Activated naive CD4-positive, alpha-beta T cell treated with anti-CD3 and anti-CD28 coated beads for 36 hours (primary cell): ENCODE measurements at regions of chr3 and their contacts with region 1.

Region 1: DNA sequence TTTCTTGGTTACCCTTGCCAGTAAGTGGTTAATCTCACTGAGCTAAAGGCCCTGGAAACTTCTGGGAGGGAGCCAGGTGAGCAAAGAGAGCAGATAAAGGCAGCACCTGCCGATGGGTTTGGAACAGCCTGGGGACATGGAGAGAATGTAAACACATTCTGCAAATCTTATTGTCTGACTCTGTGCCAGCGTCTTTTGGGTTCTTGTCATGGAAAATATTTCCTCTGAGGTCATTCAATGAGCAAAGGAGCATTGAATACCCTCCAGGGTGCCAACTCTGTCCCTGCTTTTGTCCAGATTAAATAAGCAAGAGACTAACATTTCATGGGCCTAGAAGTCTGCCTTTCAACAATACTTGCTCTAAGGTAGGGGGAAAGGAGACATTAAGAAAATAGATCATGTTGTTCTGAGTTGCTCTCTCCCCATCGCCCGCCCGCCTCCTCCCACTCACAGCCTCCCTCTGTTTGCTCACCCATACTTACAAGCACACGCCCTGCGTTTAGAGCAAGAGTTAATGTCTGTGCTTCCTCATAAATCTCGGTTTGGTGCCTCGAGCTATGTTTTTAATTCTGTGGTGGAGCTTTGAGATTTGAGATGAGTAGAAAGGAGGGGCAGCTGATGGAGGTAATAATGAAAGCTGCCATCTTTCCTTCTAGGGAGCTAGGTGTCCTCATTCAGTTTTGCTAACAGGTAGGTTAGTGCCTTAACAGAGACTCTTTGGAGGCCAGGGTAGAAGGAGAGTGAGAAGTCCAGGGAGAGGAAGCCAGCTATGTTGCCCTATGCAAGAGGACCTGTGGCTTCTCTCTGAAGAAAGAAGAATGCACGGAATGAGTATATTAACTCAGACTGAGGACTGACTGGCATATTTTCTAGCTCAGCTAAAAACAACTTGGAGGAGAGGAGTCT is 132.9 kb downstream of the TPRG1 start:
- DNase-seq: peak; percentile 59
- H3K4me3 Mint-ChIP-seq: peak overlapping the region; percentile 17
- H3K27ac Mint-ChIP-seq: peak overlapping the region; percentile 68
- H3K4me1 Mint-ChIP-seq: peaks cover 57% of the 10 kb centered on the region
- H3K27me3 Mint-ChIP-seq: no peaks in the 10 kb centered on the region

Region 2: GRCh38 chr3:189276481-189277219 is 28.0 kb before region 1 on chr3:
- CTCF ChIA-PET with region 1: interaction called, 4 read pairs
- intact Hi-C with region 1: loop called (anchors 1 kb)
- DNase-seq: no peak
- H3K4me3 Mint-ChIP-seq: no peak overlapping the region
- H3K27ac Mint-ChIP-seq: no peak overlapping the region
- H3K4me1 Mint-ChIP-seq: peaks cover 35% of the 10 kb centered on the region
- H3K27me3 Mint-ChIP-seq: no peaks in the 10 kb centered on the region

Region 3: DNA sequence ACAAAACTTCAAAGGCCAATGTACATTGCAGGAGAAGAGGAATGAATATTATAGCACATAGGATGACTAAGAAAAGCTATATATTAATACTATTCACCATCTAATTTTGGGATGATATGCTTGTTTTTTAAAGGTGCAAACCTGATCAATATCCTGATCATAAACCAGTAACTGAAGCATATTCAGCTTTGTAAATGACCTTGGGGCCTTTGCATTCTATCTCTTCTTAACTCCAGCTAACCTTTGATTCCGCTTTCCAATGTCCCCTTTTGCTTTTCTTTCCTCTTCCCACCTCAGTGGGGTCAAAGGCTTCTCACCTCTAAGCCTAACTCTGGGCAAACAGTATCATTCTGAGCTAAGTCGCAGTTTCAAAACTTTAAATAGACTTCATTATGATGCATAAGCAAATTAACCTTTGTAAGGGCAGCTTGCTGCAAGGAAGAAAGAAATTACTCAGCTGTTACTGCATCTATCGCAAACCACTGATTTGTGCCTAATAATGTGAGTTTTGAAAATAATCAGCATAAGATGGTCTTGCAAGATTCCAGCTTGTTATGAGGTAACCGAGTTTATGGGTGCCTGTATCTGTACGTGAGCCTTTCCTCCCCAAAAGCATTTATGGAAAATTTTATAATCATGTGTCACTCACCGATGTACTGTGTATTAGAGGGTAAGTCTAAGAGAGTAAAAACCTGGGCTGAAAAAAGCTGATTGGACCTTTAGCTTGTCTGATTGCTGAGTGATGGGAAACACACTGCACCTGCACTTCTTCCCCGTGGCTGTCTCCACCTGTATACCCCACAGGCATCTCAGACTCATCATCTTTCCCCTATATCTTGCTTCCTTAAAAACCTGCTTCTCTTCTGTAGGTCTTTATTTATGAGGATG is 16.1 kb before region 1 on chr3:
- CTCF ChIA-PET with region 1: interaction called, 5 read pairs
- intact Hi-C with region 1: loop called (anchors 1 kb)
- DNase-seq: no peak
- H3K4me3 Mint-ChIP-seq: no peak overlapping the region
- H3K27ac Mint-ChIP-seq: peak overlapping the region; percentile 46
- H3K4me1 Mint-ChIP-seq: peaks cover 34% of the 10 kb centered on the region
- H3K27me3 Mint-ChIP-seq: no peaks in the 10 kb centered on the region

Region 4: GRCh38 chr3:189331002-189331418 is 26.3 kb after region 1 on chr3:
- CTCF ChIA-PET with region 1: interaction called, 3 read pairs
- intact Hi-C with region 1: loop called (anchors 1 kb)
- DNase-seq: peak; percentile 47
- H3K4me3 Mint-ChIP-seq: peak overlapping the region; percentile 7
- H3K27ac Mint-ChIP-seq: peak overlapping the region; percentile 7
- H3K4me1 Mint-ChIP-seq: peaks cover 53% of the 10 kb centered on the region
- H3K27me3 Mint-ChIP-seq: no peaks in the 10 kb centered on the region

Region 5: DNA sequence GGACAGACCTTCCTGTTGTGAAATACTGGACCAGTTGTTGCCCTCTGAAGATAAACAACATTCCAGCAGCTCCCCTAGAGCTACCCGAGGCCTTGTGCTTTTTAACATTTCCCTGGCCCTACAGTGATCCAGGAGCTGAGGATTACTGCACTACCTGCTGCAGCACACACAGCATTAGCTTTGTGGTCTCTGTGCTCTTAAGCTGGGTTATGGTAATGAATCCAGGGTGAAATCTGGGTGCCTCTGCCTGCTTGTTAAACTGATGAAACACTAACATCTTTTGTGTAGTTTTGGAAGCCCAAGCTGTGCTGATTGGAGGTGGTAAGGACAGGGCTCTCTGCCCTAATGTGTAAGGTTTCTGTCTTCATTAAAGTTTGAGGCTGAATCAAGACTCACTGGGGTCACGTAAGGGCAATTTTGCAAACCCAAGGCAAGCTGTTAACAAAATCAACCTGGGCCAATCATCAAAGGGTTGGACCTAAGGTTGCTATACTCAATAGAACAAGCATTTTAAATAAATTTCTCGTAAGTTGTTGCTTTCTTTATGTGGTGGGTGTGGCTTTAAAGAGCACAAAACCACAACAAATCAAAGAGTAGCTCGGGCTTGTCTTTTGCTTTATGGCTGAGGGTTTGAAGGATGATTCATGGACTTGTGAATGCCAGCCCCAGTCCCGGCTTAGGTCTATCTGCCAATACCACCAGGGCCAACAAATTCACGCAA is 50.9 kb after region 1 on chr3:
- CTCF ChIA-PET with region 1: interaction called, 3 read pairs
- intact Hi-C with region 1: loop called (anchors 1 kb)
- DNase-seq: peak; percentile 54
- H3K4me3 Mint-ChIP-seq: peak overlapping the region; percentile 7
- H3K27ac Mint-ChIP-seq: peak overlapping the region; percentile 76
- H3K4me1 Mint-ChIP-seq: peaks cover 21% of the 10 kb centered on the region
- H3K27me3 Mint-ChIP-seq: no peaks in the 10 kb centered on the region

Region 6: DNA sequence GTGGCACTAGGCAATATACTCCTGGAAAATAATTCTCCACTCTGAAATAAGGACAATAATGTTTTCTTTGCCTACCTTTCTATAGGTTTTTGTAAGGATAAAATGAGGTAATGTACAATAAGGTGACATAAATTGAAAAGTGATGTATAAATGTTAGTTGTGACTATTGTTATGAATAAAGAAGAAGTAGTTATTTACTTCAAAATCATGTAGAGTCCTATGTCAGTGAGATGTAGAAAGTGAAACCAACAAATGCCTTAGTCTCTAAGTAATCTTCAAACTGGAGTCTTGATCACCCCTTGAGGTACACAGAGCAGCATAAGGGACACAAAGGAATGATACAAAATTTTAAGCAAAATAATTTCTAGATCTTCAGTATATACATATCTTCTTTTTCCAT is 266.2 kb after region 1 on chr3:
- CTCF ChIA-PET with region 1: no interaction called
- intact Hi-C with region 1: loop called (anchors 1 kb)
- DNase-seq: no peak
- H3K4me3 Mint-ChIP-seq: no peak overlapping the region
- H3K27ac Mint-ChIP-seq: no peak overlapping the region
- H3K4me1 Mint-ChIP-seq: peaks cover 30% of the 10 kb centered on the region
- H3K27me3 Mint-ChIP-seq: no peaks in the 10 kb centered on the region